Activated CD4-positive, alpha-beta T cell treated with anti-CD3 and anti-CD28 coated beads for 36 hours (primary cell): ENCODE measurements at regions of chr9 and their contacts with region 1.

Region 1: DNA sequence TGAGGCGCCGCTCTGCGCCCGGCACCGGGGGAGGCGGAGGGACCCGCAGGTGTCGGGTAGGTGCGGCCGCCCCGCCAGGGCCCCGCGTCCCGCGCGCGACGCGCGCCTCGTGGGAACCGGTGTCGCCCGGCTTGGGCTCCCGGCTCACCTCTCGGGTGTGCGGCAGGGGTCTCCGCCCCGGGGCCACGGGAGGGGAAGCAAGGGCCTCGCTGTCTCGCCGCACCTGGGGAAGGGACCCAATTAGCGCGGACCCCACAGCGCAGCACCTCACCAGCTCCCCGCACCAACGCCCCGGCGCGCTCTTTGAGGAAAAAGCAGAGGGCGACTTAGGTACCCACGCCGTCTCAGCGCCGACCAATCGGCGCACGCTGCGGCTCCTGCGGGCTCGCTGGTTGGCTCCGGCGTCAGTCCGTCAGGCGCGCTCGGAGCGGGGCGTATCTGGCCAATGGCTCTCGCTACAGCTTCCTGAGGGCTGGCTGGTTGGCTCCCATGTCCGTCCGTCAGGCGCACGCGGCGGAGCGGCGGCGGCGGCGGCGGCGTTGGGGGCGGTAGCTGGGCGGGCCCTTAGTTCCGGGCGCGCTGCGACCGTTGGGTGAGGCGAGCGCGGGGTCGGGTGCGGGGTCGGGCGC is at the start of gene TRAF2:
- DNase-seq: peak; percentile 98
- ATAC-seq: peak; percentile 89
- H3K4me3 Mint-ChIP-seq: peak within 1 kb of the TSS; percentile 85
- H3K27ac Mint-ChIP-seq: peak within 1 kb of the TSS; percentile 95
- H3K4me1 Mint-ChIP-seq: peaks cover 51% of the 10 kb centered on the region
- H3K27me3 Mint-ChIP-seq: no peaks in the 10 kb centered on the region
- total RNA-seq, gene TRAF2: 37.4 to 46.2 TPM

Region 2: DNA sequence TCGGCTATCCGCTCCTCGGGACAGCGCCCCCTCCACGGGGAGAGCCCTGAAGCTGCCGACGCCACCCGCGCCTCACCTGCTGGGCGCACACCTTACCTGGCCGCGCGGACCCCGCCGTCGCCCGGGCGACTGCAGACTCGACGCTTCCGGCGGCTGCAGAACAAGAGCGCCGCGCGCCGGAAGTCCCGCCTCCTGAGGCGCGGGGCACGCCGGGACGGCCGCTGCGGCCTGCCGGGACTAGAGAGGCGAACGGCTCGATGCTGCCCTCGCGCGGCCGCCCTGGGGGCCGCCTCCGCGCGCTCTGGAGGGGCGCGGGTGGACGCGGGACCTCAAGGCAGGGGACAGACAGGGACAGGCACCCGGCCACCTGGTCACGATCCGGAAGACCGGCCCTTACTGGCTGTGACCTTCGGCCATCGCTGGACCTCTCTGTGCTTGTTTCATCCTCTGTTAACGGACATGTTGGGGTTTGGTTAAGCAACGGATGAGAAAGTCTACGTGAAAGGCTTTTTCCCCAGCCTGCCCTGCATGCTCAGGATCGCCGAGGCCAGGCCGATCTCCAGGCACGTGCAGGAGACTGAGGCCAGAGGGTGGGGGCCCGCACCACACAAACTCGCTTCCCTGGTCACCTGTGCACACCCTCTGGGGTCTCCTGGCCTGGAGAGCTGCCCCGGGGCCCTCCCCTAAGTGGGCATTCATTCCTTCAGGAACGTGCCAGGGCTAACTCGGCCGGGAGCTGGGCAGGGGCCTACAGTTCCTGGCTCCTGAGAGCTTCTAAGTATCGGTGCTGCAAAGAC is 485.8 kb before region 1 on chr9 and contains the start of gene SNAPC4:
- CTCF ChIA-PET with region 1: no interaction called
- POLR2A ChIA-PET with region 1: no interaction called
- intact Hi-C with region 1: loop called in 1 of 2 experiments (anchors 1 kb)
- DNase-seq: peak; percentile 93
- ATAC-seq: peak; percentile 68
- H3K4me3 Mint-ChIP-seq: peak within 1 kb of the TSS; percentile 86
- H3K27ac Mint-ChIP-seq: peak within 1 kb of the TSS; percentile 80
- H3K4me1 Mint-ChIP-seq: peaks cover 50% of the 10 kb centered on the region
- H3K27me3 Mint-ChIP-seq: no peaks in the 10 kb centered on the region
- total RNA-seq, gene SNAPC4: 12.4 to 16.8 TPM

Region 3: GRCh38 chr9:136807281-136808074 is 78.6 kb before region 1 on chr9 and contains the start of gene RABL6:
- CTCF ChIA-PET with region 1: interaction called, 4 read pairs
- POLR2A ChIA-PET with region 1: no interaction called
- intact Hi-C with region 1: loop called in 1 of 2 experiments (anchors 1 kb)
- DNase-seq: peak; percentile 86
- ATAC-seq: peak; percentile 88
- H3K4me3 Mint-ChIP-seq: peak within 1 kb of the TSS; percentile 81
- H3K27ac Mint-ChIP-seq: peak within 1 kb of the TSS; percentile 88
- H3K4me1 Mint-ChIP-seq: peaks cover 33% of the 10 kb centered on the region
- H3K27me3 Mint-ChIP-seq: no peaks in the 10 kb centered on the region
- total RNA-seq, gene RABL6: 66.2 to 71.8 TPM

Region 4: DNA sequence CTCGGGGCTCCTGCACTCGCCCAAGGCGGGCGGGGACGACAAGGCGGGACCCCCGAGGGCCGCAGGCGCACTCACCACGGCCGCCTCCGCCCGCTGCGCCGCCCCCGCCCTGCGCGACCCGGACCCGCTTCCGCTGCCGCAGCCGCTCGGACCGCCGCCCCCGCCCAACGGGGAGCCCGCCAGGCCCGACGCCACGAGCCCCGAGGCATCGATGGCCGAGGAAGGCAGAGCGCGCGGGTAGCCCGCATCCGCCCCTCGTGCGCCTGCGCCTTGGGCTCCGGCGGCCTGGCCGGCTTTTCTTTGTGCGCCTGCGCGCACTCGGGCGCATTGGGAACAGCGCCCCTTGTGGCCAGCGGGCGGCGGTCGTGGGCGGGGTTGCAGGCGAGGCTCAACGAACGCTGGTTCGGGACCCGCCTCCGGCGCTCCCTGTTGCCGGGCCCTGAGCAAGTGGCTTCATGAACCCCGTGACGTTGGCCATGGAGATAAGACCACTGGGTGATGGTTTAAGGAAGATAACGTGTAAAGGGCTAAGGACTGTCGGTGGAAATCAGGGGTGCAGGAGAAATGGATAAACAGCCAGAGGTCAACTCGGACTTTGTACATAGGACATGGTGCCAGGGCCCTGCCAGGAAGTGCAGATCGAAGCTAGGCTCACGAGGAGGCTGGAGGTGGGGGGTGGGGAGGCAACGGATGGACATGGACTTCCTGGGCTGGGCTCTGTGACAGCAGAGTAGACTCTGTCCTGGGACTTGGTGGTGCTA is 58.6 kb after region 1 on chr9 and contains the starts of genes C8G and FBXW5:
- CTCF ChIA-PET with region 1: interaction called, 3 read pairs
- POLR2A ChIA-PET with region 1: no interaction called
- intact Hi-C with region 1: loop called (anchors 1 kb)
- DNase-seq: peak; percentile 97
- ATAC-seq: peak; percentile 84
- H3K4me3 Mint-ChIP-seq: peak within 1 kb of the TSS; percentile 77
- H3K27ac Mint-ChIP-seq: peak within 1 kb of the TSS; percentile 88
- H3K4me1 Mint-ChIP-seq: peaks cover 9% of the 10 kb centered on the region
- H3K27me3 Mint-ChIP-seq: no peaks in the 10 kb centered on the region
- total RNA-seq, gene C8G: 0.77 TPM in 1 of 2 experiments, not detected in the other
- total RNA-seq, gene FBXW5: 54.4 to 66.4 TPM

Region 5: GRCh38 chr9:137029058-137029936 is 143.2 kb after region 1 on chr9:
- CTCF ChIA-PET with region 1: interaction called, 10 read pairs
- POLR2A ChIA-PET with region 1: no interaction called
- intact Hi-C with region 1: no loop called
- DNase-seq: peak; percentile 88
- ATAC-seq: peak; percentile 52
- H3K4me3 Mint-ChIP-seq: peak overlapping the region; percentile 60
- H3K27ac Mint-ChIP-seq: peak overlapping the region; percentile 42
- H3K4me1 Mint-ChIP-seq: peaks cover 46% of the 10 kb centered on the region
- H3K27me3 Mint-ChIP-seq: no peaks in the 10 kb centered on the region

Region 6: DNA sequence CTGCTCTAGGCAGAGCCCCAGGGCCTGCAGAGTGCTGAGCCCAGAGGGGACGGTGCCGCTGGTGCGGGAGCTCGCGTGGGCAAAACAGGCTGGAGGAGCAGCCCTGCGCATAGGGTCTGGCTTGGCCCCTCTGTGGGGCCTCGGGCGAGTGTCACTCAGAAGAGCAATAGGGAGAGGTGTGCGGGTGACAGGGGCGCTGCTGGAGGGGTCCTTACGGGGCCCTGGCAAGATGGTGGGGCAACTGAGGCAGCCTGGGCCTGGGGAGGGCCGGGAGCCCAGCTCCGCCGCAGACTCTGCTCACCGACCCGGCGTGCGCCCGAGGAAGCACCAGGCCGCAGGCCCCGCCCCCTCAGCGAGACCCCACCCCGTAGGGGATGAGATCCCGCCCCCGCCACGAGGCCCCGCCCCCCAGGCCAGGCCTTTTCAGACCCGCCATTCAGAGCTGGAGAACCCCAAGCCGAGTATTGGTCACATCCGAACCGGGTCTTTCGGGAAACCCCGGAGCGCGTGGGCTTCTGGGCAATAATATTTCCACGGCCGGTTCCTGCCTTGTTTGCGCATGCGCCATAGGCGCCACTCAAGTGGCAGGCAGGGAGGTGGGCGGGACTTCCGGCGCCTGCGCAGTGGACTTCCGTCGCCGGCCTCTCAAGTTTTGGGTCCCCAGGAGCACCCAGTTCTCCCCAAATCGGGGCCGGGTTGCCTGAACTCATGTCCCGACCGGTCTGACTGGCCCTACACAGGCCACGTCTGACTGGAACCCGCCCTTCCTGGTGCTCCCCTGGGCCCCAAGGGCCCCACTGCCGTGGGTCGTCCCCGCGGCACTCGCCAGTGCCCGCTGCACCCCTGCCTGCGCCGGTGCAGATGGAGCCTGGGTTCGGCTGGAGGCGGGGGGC is 337.3 kb after region 1 on chr9:
- CTCF ChIA-PET with region 1: no interaction called
- POLR2A ChIA-PET with region 1: no interaction called
- intact Hi-C with region 1: loop called in 1 of 2 experiments (anchors 1 kb)
- DNase-seq: peak; percentile 99
- ATAC-seq: peak; percentile 90
- H3K4me3 Mint-ChIP-seq: peak overlapping the region; percentile 80
- H3K27ac Mint-ChIP-seq: peak overlapping the region; percentile 83
- H3K4me1 Mint-ChIP-seq: peaks cover 8% of the 10 kb centered on the region
- H3K27me3 Mint-ChIP-seq: peaks cover 2% of the 10 kb centered on the region